ENCODE measurements at regions of chr16 and their contacts with region 1.

Region 1: DNA sequence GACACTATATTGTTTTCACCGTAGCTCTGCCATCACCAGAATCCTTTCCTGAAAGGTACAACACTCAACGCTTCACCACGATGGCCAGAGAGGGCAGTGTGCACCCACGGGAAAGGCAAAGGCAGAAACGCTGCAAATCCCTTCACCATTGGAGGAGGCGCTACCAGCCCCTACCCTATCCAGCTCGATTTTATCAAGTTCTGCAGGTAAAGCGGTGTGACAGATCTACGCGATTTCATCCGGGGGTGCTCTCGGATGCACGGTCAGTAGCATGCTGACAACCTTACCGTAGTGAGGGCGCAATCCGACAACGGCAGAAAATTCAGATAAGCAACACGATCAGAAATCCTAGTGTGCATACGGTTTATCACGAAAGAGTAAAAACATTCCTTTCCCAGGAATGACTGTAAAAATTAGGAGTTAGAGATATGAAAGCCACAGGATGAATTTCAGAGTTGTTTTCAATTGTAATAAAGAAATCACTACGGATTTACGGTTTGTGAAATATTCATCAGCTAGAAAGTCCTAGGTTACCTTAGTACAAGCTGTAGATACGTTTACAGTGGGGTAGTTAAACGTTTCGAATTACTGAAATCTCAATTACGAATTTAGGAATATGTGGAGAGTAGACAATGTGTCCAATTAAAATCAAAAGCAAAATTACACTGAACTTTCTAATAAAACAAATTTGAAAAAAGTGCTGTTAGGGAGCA is 1.8 kb downstream of the NETO2 start:
- DNase-seq: peak; percentile 90
- ATAC-seq: peak; percentile 83
- H3K4me3 Mint-ChIP-seq: peak overlapping the region; percentile 70
- H3K27ac Mint-ChIP-seq: no peak overlapping the region
- H3K4me1 Mint-ChIP-seq: peaks cover 20% of the 10 kb centered on the region
- H3K27me3 Mint-ChIP-seq: peaks cover 26% of the 10 kb centered on the region
- CTCF ChIP-seq: peak; percentile 86

Region 2: GRCh38 chr16:46736695-46737094 is 405.2 kb before region 1 on chr16:
- CTCF ChIA-PET with region 1: no interaction called
- POLR2A ChIA-PET with region 1: no interaction called
- intact Hi-C with region 1: no loop called
- DNase-seq: no peak
- ATAC-seq: no peak
- H3K4me3 Mint-ChIP-seq: no peak overlapping the region
- H3K27ac Mint-ChIP-seq: no peak overlapping the region
- H3K4me1 Mint-ChIP-seq: no peaks in the 10 kb centered on the region
- H3K27me3 Mint-ChIP-seq: no peaks in the 10 kb centered on the region
- CTCF ChIP-seq: no peak

Region 3: GRCh38 chr16:47037746-47038458 is 104.0 kb before region 1 on chr16:
- CTCF ChIA-PET with region 1: interaction called, 32 read pairs
- POLR2A ChIA-PET with region 1: interaction called, 3 read pairs
- intact Hi-C with region 1: no loop called
- DNase-seq: peak; percentile 91
- ATAC-seq: peak; percentile 97
- H3K4me3 Mint-ChIP-seq: peak overlapping the region; percentile 69
- H3K27ac Mint-ChIP-seq: no peak overlapping the region
- H3K4me1 Mint-ChIP-seq: peaks cover 3% of the 10 kb centered on the region
- H3K27me3 Mint-ChIP-seq: peaks cover 7% of the 10 kb centered on the region
- CTCF ChIP-seq: peak; percentile 96

Region 4: DNA sequence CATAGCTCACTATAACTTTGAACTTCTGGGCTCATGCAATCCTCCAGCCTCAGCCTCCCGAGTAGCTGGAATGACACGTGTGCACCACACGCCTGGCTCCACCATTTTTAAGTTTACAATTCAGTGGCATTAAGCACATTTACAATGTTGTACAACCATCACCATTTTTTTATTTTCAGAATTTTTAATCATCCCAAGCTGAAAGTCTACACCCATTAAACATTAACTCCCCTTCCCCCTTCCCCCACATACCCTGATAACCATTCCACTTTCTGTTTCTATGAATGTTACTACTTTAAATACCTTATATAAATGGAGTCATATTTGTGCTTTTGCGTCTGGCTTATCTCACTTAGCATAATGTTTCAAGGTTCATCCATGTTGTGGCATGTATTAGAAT is 16.2 kb before region 1 on chr16:
- CTCF ChIA-PET with region 1: interaction called, 13 read pairs
- POLR2A ChIA-PET with region 1: no interaction called
- intact Hi-C with region 1: no loop called
- DNase-seq: no peak
- ATAC-seq: no peak
- H3K4me3 Mint-ChIP-seq: no peak overlapping the region
- H3K27ac Mint-ChIP-seq: no peak overlapping the region
- H3K4me1 Mint-ChIP-seq: peaks cover 4% of the 10 kb centered on the region
- H3K27me3 Mint-ChIP-seq: peaks cover 12% of the 10 kb centered on the region
- CTCF ChIP-seq: no peak

Region 5: DNA sequence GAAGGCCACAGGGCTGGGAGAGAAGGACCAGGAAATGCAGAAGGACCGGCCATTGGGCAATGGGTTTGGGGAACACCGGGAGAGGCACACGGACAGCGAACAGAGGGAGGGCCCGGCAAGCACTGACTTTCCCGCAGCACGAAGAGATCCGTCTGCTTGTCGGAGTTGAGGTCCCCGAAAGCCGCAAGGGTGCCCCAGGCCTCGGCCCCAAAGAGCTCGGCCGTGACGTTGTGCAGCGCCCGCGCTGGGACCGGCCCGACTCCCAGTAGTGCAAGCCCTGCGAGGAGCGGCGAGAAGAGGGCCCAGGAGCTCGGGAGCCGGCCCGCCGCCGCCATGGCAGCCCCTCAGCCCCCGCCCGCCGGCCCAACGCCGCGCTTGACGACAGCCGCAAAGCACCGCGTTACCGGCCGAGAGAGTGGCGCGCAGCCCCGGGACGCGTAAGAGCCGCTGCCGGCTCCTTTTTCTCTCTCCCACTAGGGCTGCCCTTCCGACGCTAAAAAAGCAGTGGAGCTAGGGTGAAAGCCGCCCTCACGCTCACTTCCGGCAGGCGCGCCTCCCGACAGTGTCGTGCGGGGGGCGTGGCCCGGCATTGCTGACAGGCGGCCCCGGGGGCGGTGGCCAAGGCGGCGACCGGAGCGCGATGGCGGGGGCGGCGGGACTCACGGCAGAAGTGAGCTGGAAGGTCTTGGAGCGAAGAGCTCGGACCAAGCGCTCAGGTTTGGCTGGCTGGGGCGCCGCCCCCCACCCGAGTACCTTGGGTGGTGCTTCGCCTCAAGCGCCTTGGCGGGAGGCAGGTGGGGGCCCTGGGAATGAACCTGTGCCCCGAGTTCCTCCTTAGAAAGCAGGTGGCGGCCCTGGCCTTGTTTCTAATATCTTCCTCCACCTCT is 319.0 kb after region 1 on chr16 and contains the starts of genes ITFG1 and PHKB:
- CTCF ChIA-PET with region 1: interaction called, 12 read pairs
- POLR2A ChIA-PET with region 1: interaction called, 3 read pairs
- intact Hi-C with region 1: loop called (anchors 10 kb)
- DNase-seq: peak; percentile 97
- ATAC-seq: peak; percentile 94
- H3K4me3 Mint-ChIP-seq: peak within 1 kb of the TSS; percentile 95
- H3K27ac Mint-ChIP-seq: peak within 1 kb of the TSS; percentile 95
- H3K4me1 Mint-ChIP-seq: peaks cover 58% of the 10 kb centered on the region
- H3K27me3 Mint-ChIP-seq: no peaks in the 10 kb centered on the region
- CTCF ChIP-seq: no peak
- total RNA-seq, gene ITFG1: 16.5 to 16.7 TPM
- total RNA-seq, gene PHKB: 20.2 to 23.1 TPM

Region 6: GRCh38 chr16:48164907-48165726 is 1023.2 kb after region 1 on chr16:
- CTCF ChIA-PET with region 1: interaction called, 47 read pairs
- POLR2A ChIA-PET with region 1: no interaction called
- intact Hi-C with region 1: no loop called
- DNase-seq: peak; percentile 73
- ATAC-seq: peak; percentile 91
- H3K4me3 Mint-ChIP-seq: no peak overlapping the region
- H3K27ac Mint-ChIP-seq: no peak overlapping the region
- H3K4me1 Mint-ChIP-seq: no peaks in the 10 kb centered on the region
- H3K27me3 Mint-ChIP-seq: peaks cover 7% of the 10 kb centered on the region
- CTCF ChIP-seq: peak; percentile 88